ENCODE measurements at regions of chr10 and their contacts with region 1.

Region 1: DNA sequence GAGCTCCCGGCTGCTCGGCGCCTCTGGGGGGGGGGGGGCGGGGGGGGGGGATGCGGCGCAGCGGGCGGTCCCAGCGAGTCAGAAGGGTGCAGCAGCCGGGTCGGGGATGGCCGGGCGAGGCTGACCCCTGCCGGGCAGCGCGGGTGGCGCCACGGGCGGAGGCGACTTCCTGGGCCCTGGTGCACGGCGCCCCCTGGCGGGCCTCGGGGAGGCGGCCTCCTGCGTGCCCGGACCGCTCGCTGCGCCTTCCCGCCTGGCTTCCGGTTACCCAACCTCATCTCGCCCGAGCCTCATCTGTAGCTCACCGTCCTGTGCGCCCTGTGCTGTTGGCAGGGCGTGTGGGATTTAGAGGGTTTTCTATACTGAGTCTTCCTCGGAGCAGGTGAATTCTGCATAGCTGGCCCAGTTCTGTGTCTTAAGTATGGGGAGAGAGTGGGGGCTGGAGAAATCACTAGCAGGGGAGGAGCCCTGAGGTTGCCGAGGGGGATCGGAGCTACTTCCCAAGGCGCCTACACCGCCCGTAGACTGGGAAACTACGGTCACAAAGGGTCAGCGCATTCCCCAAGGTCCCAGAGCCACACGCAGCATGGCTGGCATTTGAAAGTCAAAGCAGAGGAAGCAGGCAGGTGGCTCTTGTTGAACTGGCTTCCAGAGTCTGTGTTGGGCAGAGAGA is 28.3 kb upstream of the WDFY4 start:
- DNase-seq: peak; percentile 64 to 93 (median 78)
- ATAC-seq: peak; percentile 92
- H3K4me3 ChIP-seq: peak overlapping the region; percentile 49
- H3K4me3 Mint-ChIP-seq: peak overlapping the region; percentile 76
- H3K27ac ChIP-seq: no peak overlapping the region
- H3K27ac Mint-ChIP-seq: no peak overlapping the region
- H3K4me1 ChIP-seq: peaks cover 19% of the 10 kb centered on the region
- H3K4me1 Mint-ChIP-seq: peaks cover 5% of the 10 kb centered on the region
- H3K27me3 ChIP-seq: peaks cover 7 to 10% of the 10 kb centered on the region in 2 experiments
- H3K27me3 Mint-ChIP-seq: peaks cover 33% of the 10 kb centered on the region
- CTCF ChIP-seq: peak; percentile 83

Region 2: DNA sequence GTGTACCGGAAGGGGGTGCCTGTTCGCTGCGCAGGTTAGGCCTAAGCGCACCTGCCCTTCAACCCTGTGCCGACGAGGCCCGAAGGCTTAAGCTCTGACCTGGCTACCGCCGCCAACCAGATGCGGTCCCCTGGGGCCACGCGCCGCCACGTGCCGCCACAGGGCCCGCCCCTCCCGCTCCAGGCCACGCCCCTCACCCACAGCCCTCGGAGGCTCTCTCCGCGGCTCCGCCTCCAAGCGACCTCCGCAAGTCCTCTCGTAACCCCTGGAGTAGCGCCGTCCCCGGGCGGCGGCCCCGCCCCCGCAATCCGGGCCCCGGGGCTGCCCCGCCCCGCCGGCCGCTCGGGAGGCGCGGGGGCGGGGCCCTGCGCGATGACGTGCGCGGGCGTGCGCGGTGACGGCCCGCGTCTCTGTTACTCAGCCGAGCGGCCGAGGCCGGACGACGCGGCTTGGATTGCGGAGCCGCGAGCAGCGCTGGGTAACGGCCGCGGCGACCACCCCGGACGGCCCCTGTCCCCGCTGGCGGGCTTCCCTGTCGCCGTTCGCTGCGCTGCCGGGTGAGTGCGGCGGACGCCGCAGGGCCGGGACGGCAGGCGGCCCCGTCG is 350.0 kb before region 1 on chr10 and contains the start of gene MAPK8:
- CTCF ChIA-PET with region 1: interaction called, 4 read pairs
- POLR2A ChIA-PET with region 1: interaction called, 3 read pairs
- intact Hi-C with region 1: loop called in 1 of 2 experiments (anchors 5 kb)
- DNase-seq: peak; percentile 86 to 98 (median 90)
- ATAC-seq: peak; percentile 88
- H3K4me3 ChIP-seq: peak within 1 kb of the TSS; percentile 57
- H3K4me3 Mint-ChIP-seq: peak within 1 kb of the TSS; percentile 91
- H3K27ac ChIP-seq: peak within 1 kb of the TSS; percentile 65 to 86
- H3K27ac Mint-ChIP-seq: peak within 1 kb of the TSS; percentile 93
- H3K4me1 ChIP-seq: peaks cover 15% of the 10 kb centered on the region
- H3K4me1 Mint-ChIP-seq: peaks cover 40% of the 10 kb centered on the region
- H3K27me3 ChIP-seq: no peaks in the 10 kb centered on the region
- H3K27me3 Mint-ChIP-seq: no peaks in the 10 kb centered on the region
- CTCF ChIP-seq: no peak
- total RNA-seq, gene MAPK8: 47.8 to 50.6 TPM

Region 3: GRCh38 chr10:48506147-48506917 is 150.0 kb before region 1 on chr10:
- CTCF ChIA-PET with region 1: no interaction called
- POLR2A ChIA-PET with region 1: no interaction called
- intact Hi-C with region 1: no loop called
- DNase-seq: peak in 1 of 14 experiments; percentile 24
- ATAC-seq: no peak
- H3K4me3 ChIP-seq: no peak overlapping the region
- H3K4me3 Mint-ChIP-seq: no peak overlapping the region
- H3K27ac ChIP-seq: no peak overlapping the region
- H3K27ac Mint-ChIP-seq: no peak overlapping the region
- H3K4me1 ChIP-seq: peaks cover 4% of the 10 kb centered on the region
- H3K4me1 Mint-ChIP-seq: no peaks in the 10 kb centered on the region
- H3K27me3 ChIP-seq: no peaks in the 10 kb centered on the region
- H3K27me3 Mint-ChIP-seq: no peaks in the 10 kb centered on the region
- CTCF ChIP-seq: no peak

Region 4: GRCh38 chr10:48579251-48579960 is 77.0 kb before region 1 on chr10:
- CTCF ChIA-PET with region 1: no interaction called
- POLR2A ChIA-PET with region 1: no interaction called
- intact Hi-C with region 1: no loop called
- DNase-seq: no peak
- ATAC-seq: no peak
- H3K4me3 ChIP-seq: no peak overlapping the region
- H3K4me3 Mint-ChIP-seq: no peak overlapping the region
- H3K27ac ChIP-seq: no peak overlapping the region
- H3K27ac Mint-ChIP-seq: no peak overlapping the region
- H3K4me1 ChIP-seq: no peaks in the 10 kb centered on the region
- H3K4me1 Mint-ChIP-seq: no peaks in the 10 kb centered on the region
- H3K27me3 ChIP-seq: no peaks in the 10 kb centered on the region
- H3K27me3 Mint-ChIP-seq: peaks cover 14% of the 10 kb centered on the region
- CTCF ChIP-seq: no peak

Region 5: DNA sequence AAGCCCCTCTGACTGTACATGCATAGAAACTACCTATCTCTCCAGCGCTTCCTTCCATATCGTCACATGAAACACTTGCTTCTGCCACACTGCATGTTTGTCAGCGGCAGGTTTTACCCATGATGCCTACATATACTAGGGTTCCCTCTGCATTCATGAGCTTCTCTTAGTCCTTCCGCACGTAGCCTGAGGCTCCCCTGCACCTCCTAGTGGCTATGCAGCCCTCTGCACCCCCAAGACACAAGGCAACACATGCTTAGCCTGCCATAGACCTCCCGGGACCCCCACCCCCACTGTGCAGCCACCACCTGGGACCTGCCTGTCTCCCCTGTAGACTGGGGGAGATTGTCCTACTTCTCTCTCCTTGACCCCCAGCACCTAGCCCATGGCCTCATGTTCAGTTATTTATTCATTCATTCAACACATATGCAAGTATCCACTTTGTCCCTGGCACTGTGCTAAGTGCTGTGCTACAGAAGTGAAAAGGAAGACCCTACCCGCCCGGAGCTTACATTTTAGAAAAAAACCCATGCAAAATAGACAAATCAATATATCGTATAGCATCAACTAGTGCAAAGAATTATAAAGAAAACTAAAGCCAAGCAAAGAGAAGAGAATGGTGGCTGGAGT is 508.3 kb after region 1 on chr10:
- CTCF ChIA-PET with region 1: no interaction called
- POLR2A ChIA-PET with region 1: interaction called, 3 read pairs
- intact Hi-C with region 1: loop called in 1 of 2 experiments (anchors 2 kb)
- DNase-seq: peak in 9 of 14 experiments; percentile 11 to 54 (median 27)
- ATAC-seq: peak; percentile 78
- H3K4me3 ChIP-seq: no peak overlapping the region
- H3K4me3 Mint-ChIP-seq: no peak overlapping the region
- H3K27ac ChIP-seq: no peak overlapping the region
- H3K27ac Mint-ChIP-seq: no peak overlapping the region
- H3K4me1 ChIP-seq: peaks cover 2% of the 10 kb centered on the region
- H3K4me1 Mint-ChIP-seq: peaks cover 7% of the 10 kb centered on the region
- H3K27me3 ChIP-seq: no peaks in the 10 kb centered on the region
- H3K27me3 Mint-ChIP-seq: no peaks in the 10 kb centered on the region
- CTCF ChIP-seq: no peak

Region 6: DNA sequence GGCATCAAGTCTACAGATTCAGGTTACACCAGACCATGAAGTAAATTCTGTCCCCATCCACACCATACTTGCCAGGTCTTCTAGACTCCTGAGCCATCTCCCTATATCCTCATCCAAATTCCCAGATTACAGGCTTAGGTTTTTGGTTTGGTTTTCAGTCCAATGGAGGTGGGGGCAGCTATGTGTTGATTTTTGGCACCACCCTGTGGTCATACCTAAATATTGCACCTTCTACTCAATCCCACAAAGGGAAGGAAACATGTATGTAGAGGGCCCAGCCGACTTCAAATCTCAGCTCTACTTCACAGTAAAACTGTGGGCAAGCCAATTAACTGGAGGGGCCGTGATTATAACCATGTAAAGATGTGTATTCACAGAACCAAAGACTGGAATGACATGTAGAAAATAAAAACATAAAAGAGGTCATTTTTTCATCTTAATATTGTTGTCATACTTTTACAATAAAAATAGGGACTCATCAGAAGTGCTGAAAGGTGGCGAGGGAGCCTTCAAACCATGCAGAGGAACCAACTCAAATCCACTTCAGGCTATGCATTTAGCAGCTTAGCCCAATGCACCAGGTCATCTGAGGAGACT is 862.7 kb after region 1 on chr10:
- CTCF ChIA-PET with region 1: no interaction called
- POLR2A ChIA-PET with region 1: no interaction called
- intact Hi-C with region 1: loop called (anchors 2 kb)
- DNase-seq: peak in 5 of 14 experiments; percentile 10 to 68 (median 50)
- ATAC-seq: no peak
- H3K4me3 ChIP-seq: no peak overlapping the region
- H3K4me3 Mint-ChIP-seq: no peak overlapping the region
- H3K27ac ChIP-seq: no peak overlapping the region
- H3K27ac Mint-ChIP-seq: no peak overlapping the region
- H3K4me1 ChIP-seq: no peaks in the 10 kb centered on the region
- H3K4me1 Mint-ChIP-seq: peaks cover 5% of the 10 kb centered on the region
- H3K27me3 ChIP-seq: no peaks in the 10 kb centered on the region
- H3K27me3 Mint-ChIP-seq: peaks cover 3% of the 10 kb centered on the region
- CTCF ChIP-seq: peak; percentile 70